ENCODE measurements at regions of chrX and their contacts with region 1.

Region 1: GRCh38 chrX:104565791-104566680 is at the start of gene IL1RAPL2:
- DNase-seq: no peak
- ATAC-seq: peak; percentile 86
- H3K4me3 ChIP-seq: peak within 1 kb of the TSS; percentile 16 to 46
- H3K27ac ChIP-seq: no peak within 1 kb of the TSS
- H3K4me1 ChIP-seq: peaks cover 9% of the 10 kb centered on the region
- H3K27me3 ChIP-seq: peaks cover 9% of the 10 kb centered on the region; the same call in 1 of the 2 replicates
- CTCF ChIP-seq: peak; percentile 90
- total RNA-seq, gene IL1RAPL2: not detected

Region 2: DNA sequence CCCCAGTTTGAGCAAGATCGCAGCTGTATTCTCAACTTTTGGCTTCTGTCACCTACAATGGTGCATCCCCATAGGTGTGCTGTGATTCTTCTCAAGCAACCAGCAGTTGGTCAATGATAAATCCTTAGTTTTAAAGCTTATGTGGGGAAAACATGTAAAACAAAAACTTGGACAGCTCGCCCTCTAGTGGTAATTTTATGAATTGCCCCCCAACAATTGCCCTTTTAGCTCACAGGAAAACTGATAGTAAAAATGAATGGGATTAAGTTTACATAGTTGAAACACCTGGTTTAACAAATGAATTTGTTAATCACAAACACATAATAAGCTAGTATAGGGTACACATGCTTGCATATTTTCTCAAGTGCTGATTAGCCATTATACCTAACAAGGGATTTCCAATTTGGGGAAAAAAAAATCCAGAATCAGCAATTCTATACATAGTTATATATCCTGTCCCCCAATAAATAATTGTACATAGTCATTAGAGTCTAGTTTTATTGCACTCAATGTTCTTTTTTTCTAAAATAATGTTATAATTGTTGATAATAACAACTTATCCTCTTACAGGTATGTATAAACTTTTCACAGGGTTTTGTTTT is 624.3 kb after region 1 on chrX:
- CTCF ChIA-PET with region 1: interaction called, 3 read pairs
- POLR2A ChIA-PET with region 1: no interaction called
- in situ Hi-C with region 1: no loop called
- intact Hi-C with region 1: loop called (anchors 10 kb)
- DNase-seq: peak; percentile 36
- ATAC-seq: peak; percentile 73
- H3K4me3 ChIP-seq: no peak overlapping the region
- H3K27ac ChIP-seq: no peak overlapping the region
- H3K4me1 ChIP-seq: no peaks in the 10 kb centered on the region
- H3K27me3 ChIP-seq: no peaks in the 10 kb centered on the region
- CTCF ChIP-seq: peak; percentile 78